Endothelial cell of umbilical vein (primary cell): ENCODE measurements at regions of chr11 and their contacts with region 1.

Region 1: GRCh38 chr11:123478352-123478987 is 48.4 kb downstream of the GRAMD1B start:
- DNase-seq: peak; percentile 76
- H3K4me3 ChIP-seq: no peak overlapping the region
- H3K27ac ChIP-seq: no peak overlapping the region
- H3K4me1 ChIP-seq: peaks cover 25% of the 10 kb centered on the region
- H3K27me3 ChIP-seq: no peaks in the 10 kb centered on the region
- CTCF ChIP-seq: peak; percentile 54 to 58
- POLR2A ChIP-seq: no peak

Region 2: DNA sequence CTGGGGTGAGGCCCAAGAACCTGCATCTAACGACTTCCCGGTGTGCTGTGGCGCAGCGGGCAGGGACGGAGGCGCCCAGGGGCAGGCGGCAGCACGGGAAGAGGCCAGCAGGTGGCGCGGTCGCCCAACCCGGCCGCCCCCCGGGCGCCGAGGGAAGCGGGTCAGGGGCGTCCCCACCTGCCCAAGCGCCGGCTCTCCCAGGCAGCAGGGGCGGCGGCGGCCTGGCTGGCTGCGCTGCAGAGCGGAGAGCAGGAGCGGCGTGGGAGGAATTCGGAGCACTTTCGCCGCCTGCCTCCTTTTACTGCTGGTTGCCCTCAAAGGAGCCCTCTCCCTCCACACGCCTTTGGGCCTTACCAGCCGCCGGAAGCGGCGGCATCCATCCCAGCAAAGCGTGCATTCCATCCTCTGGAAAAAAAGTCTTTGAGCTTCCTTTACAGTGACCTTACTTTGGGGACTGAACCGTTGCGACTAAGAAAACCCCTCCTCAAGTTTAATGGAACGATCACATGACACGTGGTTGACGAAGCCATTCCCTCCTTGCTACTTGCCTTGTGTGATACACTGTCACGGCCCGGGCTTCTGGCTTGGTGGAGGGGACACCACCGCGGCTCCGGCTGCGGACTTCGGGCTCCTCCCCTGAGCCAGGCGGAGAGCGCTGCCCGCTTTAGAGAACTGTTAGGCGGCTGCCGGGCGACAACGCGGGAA is 176.6 kb before region 1 on chr11:
- CTCF ChIA-PET with region 1: interaction called, 56 read pairs
- POLR2A ChIA-PET with region 1: no interaction called
- dilution Hi-C with region 1: loop called (anchors 25 kb)
- intact Hi-C with region 1: loop called (anchors 1 kb)
- DNase-seq: peak; percentile 43
- H3K4me3 ChIP-seq: peak overlapping the region in 2 of 3 experiments; percentile 15 to 29
- H3K27ac ChIP-seq: no peak overlapping the region
- H3K4me1 ChIP-seq: peaks cover 17% of the 10 kb centered on the region
- H3K27me3 ChIP-seq: peaks cover 4 to 6% of the 10 kb centered on the region in 2 experiments
- CTCF ChIP-seq: peak; percentile 81 to 84
- POLR2A ChIP-seq: no peak

Region 3: GRCh38 chr11:123308077-123308476 is 170.4 kb before region 1 on chr11:
- CTCF ChIA-PET with region 1: interaction called, 14 read pairs
- POLR2A ChIA-PET with region 1: no interaction called
- dilution Hi-C with region 1: loop called (anchors 25 kb)
- intact Hi-C with region 1: no loop called
- DNase-seq: peak; percentile 22
- H3K4me3 ChIP-seq: no peak overlapping the region
- H3K27ac ChIP-seq: no peak overlapping the region
- H3K4me1 ChIP-seq: no peaks in the 10 kb centered on the region
- H3K27me3 ChIP-seq: peaks cover 2 to 5% of the 10 kb centered on the region in 2 experiments
- CTCF ChIP-seq: no peak
- POLR2A ChIP-seq: no peak

Region 4: DNA sequence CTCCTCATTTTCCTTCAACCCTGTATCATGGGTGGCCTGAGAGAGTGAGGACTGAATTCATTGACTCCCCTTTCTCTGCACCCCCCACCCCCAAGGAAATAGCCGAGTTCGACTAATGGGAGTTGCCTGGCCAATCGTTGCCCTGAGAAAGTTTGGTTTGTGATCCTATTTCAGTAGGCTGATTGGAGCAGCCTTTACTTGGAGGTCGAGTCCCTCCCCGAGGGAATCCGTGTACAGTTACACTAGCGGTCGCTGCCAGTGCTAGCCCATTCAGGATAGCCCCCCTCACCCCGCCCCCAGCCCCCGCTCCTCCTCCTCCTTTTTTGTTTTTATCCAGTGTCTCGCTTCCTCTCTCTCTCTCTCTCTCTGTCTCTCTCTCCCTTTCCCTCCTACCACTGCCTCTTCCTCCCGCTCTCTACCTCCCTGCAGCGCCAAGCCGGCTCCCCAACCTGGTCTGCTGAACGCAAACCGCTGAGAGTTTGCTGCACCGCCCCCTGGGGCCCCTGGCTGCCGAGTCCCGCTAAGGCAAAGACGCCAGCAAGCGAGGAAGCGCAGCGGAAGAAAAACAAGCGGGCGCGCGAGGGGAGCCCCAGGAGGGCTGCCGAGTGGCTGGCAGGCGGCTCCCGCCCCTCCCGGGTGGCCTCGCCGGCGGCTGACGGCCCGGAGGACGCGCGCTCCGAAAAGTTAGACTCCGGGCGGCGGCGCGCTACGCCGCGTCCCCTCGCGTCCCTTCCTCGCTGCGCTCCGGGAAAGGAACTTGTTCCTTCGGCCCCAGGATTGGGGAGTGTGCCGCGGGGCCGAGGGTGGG is 48.4 kb before region 1 on chr11 and contains the start of gene GRAMD1B:
- CTCF ChIA-PET with region 1: interaction called, 21 read pairs
- POLR2A ChIA-PET with region 1: no interaction called
- dilution Hi-C with region 1: no loop called
- intact Hi-C with region 1: loop called (anchors 1 kb)
- DNase-seq: peak; percentile 66
- H3K4me3 ChIP-seq: peak within 1 kb of the TSS; percentile 37 to 63 (median 61)
- H3K27ac ChIP-seq: peak within 1 kb of the TSS; percentile 3
- H3K4me1 ChIP-seq: peaks cover 11% of the 10 kb centered on the region
- H3K27me3 ChIP-seq: peaks cover 14% of the 10 kb centered on the region in 2 experiments
- CTCF ChIP-seq: peak in 1 of 2 donors; percentile 25
- POLR2A ChIP-seq: no peak
- total RNA-seq, gene GRAMD1B: 6.8 and 11.1 TPM in 2 replicates

Region 5: DNA sequence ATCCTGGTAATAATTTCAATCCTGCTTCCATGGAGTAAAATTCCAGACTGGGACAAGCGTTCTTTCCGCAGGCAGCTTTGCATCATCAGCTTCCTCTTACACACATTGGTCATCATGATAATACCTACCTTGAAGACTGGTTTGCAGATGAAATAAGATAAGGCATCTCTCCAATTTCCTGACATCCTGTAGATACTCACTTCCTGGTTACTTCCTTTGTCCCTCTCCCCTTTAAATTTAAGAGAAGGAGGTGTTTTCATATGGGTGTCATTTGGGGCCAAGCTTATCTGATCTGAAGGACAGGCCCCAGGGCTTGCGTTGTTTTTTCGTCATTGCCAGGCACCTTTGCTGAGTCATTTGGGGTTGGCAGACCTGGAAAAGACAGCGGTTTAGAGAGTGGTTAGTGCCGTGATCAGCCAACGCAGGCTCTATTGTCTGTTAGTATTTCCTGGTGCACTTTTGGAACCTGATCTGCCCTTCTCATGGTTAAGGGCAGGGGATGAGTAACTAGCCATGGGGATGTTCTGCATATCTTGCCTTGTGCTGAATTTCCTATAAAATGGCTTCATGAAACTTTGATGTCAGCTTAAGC is 24.3 kb before region 1 on chr11:
- CTCF ChIA-PET with region 1: interaction called, 12 read pairs
- POLR2A ChIA-PET with region 1: no interaction called
- dilution Hi-C with region 1: no loop called
- intact Hi-C with region 1: loop called (anchors 1 kb)
- DNase-seq: peak; percentile 26
- H3K4me3 ChIP-seq: no peak overlapping the region
- H3K27ac ChIP-seq: peak overlapping the region; percentile 9
- H3K4me1 ChIP-seq: peaks cover 15% of the 10 kb centered on the region
- H3K27me3 ChIP-seq: no peaks in the 10 kb centered on the region
- CTCF ChIP-seq: no peak
- POLR2A ChIP-seq: no peak

Region 6: DNA sequence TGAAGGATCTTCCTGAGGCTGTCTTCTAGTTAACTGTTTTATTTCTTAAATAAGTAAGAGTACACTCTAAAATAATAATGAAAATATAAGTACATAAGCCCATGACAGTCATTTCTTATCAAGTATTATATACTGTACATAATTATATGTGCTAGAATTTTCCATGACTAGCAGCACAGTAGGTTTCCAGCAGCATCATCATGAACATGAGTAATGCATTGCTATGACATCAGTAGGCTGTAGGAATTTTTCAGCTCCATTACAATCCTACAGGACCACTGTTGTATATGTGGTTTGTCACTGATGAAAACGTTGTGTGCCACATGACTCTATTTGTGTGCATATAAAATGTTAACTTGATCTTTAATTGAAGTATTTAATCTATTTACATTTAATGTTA is 241.0 kb after region 1 on chr11:
- CTCF ChIA-PET with region 1: no interaction called
- POLR2A ChIA-PET with region 1: no interaction called
- dilution Hi-C with region 1: no loop called
- intact Hi-C with region 1: no loop called
- DNase-seq: no peak
- H3K4me3 ChIP-seq: no peak overlapping the region
- H3K27ac ChIP-seq: no peak overlapping the region
- H3K4me1 ChIP-seq: no peaks in the 10 kb centered on the region
- H3K27me3 ChIP-seq: peaks cover under 1 to 5% of the 10 kb centered on the region in 2 experiments
- CTCF ChIP-seq: no peak
- POLR2A ChIP-seq: no peak